ENCODE measurements at regions of chr2 and their contacts with region 1.

Region 1: DNA sequence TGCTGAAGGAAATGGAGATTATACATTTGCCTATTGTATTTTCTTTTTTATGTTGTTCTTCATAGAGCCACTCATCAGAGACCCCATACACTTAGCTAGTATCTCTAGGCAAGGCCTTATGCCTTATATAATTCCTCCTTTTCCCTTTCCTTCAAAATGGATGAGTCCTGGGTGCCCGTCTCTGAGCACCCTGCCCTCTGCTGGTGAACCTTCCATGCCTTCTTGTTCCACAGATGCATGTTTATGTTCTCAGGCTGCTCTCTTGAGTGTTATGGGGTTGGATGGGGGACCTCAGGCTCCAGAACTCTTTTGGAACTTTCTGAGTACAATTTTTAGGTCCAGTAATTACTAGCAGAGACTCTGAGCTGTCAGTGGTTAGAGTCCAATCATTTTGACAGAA is 368.6 kb upstream of the SPRED2 start:
- DNase-seq: peak in 1 of 2 experiments; percentile 9
- H3K4me3 ChIP-seq: no peak overlapping the region
- H3K4me3 Mint-ChIP-seq: no peak overlapping the region
- H3K27ac Mint-ChIP-seq: no peak overlapping the region
- H3K4me1 ChIP-seq: no peaks in the 10 kb centered on the region
- H3K4me1 Mint-ChIP-seq: no peaks in the 10 kb centered on the region
- H3K27me3 ChIP-seq: no peaks in the 10 kb centered on the region; the same call in 1 of the 2 replicates
- H3K27me3 Mint-ChIP-seq: peaks cover 18% of the 10 kb centered on the region
- CTCF ChIP-seq: peak; percentile 12 to 31

Region 2: DNA sequence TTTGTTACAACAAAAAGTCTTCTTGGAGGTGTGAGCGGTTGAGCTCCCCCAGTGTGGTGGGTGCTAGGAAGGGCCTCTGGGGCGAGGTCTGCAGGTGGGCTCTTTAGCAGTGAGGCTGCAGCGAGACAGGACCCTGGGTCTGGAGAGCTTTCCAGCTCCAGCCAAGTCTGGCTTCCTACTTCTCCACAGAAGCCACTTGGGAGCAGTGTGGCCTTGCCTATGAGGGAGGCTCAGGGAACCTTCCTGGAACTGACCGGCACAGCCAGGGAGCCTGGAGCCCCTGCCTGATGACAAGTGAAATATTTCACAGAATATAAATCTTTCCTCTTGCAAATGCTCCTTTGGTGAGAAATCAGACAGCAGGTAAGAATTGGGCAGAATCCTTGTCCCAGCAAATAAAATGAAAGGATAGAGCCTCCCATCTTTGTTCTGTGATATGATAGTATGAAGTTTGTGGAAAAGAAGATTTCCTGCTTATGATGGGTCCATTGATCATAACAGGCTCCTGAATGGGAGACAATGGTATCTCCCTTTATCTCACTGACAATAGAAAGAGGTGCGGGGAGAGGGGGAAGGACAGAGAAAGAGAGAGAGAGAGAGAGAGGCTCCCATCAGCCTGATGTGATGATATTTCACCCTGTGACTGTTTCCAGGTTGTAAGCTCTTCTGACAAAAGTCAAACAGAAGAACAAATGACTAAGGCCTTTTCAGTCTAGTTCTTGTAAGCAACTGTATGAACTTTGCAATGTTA is 78.8 kb before region 1 on chr2:
- CTCF ChIA-PET with region 1: no interaction called
- POLR2A ChIA-PET with region 1: no interaction called
- intact Hi-C with region 1: loop called (anchors 1 kb)
- DNase-seq: peak; percentile 22 to 50
- H3K4me3 ChIP-seq: no peak overlapping the region
- H3K4me3 Mint-ChIP-seq: no peak overlapping the region
- H3K27ac Mint-ChIP-seq: no peak overlapping the region
- H3K4me1 ChIP-seq: no peaks in the 10 kb centered on the region
- H3K4me1 Mint-ChIP-seq: no peaks in the 10 kb centered on the region
- H3K27me3 ChIP-seq: no peaks in the 10 kb centered on the region
- H3K27me3 Mint-ChIP-seq: peaks cover 17% of the 10 kb centered on the region
- CTCF ChIP-seq: no peak

Region 3: GRCh38 chr2:65952951-65953350 is 152.0 kb after region 1 on chr2:
- CTCF ChIA-PET with region 1: no interaction called
- POLR2A ChIA-PET with region 1: no interaction called
- intact Hi-C with region 1: no loop called
- DNase-seq: no peak
- H3K4me3 ChIP-seq: no peak overlapping the region
- H3K4me3 Mint-ChIP-seq: no peak overlapping the region
- H3K27ac Mint-ChIP-seq: no peak overlapping the region
- H3K4me1 ChIP-seq: no peaks in the 10 kb centered on the region
- H3K4me1 Mint-ChIP-seq: no peaks in the 10 kb centered on the region
- H3K27me3 ChIP-seq: no peaks in the 10 kb centered on the region
- H3K27me3 Mint-ChIP-seq: peaks cover 3% of the 10 kb centered on the region
- CTCF ChIP-seq: no peak